Posterior vena cava (tissue), 2 donors: ENCODE measurements at regions of chr11 and their contacts with region 1.

Region 1: DNA sequence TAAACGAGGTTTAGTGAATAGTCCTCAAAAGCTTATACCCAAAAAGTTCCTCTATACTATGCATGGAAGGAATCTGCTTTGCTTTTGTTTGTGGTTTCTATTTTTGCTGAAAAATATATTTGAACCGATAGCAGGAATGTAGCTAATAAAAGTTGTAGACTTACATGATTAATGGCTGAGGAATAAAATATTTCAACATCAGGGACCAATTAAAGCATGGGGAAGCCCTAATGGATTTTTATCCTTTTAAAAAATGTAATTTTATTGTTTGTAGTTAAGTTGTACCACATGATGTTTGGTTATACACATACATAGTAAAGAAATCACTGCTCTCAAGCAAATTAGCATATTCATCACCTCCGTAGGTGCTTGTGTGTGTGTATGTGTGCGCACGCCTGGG is 295.3 kb upstream of the CNTN5 start:
- DNase-seq: no peak

Region 2: DNA sequence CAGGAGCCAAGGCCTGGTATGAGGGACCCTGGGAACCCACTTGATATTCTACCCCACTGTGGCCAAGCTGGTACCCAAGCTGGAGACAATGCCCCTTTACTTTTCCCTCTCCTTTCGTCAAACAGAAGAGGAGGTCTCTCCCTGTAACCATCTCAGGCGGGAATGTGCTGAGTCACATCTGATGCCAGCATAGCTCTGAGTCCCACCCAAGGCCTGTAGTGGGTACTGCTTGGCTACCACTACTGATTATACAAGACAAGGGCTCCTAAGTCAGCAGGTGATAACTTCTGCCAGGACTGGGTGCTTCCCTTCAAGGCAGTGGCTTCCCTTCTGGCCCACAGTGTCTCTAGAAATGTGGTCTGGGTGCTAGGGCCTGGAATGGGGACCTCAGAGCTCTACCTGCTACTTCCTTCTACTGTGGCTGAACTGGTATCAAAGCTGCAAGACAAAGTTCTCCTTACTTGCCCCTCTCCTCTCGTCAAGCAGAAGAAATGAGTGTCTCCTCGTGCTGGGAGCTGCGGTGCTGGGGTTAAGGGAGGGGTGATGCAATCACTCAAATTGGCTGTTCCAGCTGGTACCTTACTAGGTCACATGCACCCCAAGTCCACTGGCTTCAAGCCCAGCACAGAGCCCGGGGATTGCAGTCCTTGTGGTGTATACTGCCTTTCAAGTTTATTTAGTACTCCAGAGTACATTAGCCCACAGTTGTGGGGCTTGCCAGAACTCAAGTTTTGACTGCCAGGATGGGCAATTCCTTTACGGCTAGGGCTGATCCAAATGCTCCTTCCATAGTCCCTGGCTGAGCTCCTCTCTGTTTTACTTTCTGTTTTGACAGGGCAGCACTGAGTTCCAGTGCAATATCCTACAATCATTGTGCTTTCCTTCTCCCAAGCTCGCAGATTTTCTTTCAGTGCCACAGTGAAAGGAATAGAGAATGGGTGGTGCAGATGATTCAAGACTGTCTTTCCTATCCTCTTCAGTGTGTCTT is 124.4 kb before region 1 on chr11:
- intact Hi-C with region 1: no loop called
- DNase-seq: no peak

Region 3: GRCh38 chr11:98793276-98793675 is 67.8 kb after region 1 on chr11:
- intact Hi-C with region 1: loop called in 1 of 2 experiments (anchors 2 kb)
- DNase-seq: peak; percentile 54